Astrocyte of the cerebellum (primary cell): ENCODE measurements at regions of chr3 and their contacts with region 1.

Region 1: DNA sequence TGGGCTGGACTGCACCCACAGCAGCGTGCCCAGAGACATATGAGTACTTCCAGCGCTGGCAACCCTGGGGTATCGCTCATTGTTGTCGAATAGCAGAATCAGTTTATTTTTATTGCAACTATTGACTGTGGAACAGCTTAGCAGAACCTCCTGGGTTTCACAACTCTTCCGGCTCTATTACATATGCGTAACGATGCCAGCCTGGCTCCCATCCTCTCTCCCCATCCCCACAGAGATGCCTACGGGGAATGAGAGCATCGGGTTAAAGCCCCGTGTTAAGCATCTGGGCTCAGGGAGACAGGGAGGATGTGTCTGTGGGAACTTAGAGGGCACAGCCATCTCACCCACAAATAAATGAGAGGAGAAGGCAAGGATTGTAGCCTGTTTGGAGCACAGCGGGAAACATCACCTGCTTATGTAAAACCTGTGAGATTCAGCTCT is 76.6 kb upstream of the DLG1 start:
- DNase-seq: no peak
- H3K4me3 ChIP-seq: no peak overlapping the region
- CTCF ChIP-seq: no peak

Region 2: GRCh38 chr3:197327701-197328100 is 47.3 kb before region 1 on chr3:
- in situ Hi-C with region 1: no loop called
- DNase-seq: no peak
- H3K4me3 ChIP-seq: no peak overlapping the region
- CTCF ChIP-seq: no peak

Region 3: DNA sequence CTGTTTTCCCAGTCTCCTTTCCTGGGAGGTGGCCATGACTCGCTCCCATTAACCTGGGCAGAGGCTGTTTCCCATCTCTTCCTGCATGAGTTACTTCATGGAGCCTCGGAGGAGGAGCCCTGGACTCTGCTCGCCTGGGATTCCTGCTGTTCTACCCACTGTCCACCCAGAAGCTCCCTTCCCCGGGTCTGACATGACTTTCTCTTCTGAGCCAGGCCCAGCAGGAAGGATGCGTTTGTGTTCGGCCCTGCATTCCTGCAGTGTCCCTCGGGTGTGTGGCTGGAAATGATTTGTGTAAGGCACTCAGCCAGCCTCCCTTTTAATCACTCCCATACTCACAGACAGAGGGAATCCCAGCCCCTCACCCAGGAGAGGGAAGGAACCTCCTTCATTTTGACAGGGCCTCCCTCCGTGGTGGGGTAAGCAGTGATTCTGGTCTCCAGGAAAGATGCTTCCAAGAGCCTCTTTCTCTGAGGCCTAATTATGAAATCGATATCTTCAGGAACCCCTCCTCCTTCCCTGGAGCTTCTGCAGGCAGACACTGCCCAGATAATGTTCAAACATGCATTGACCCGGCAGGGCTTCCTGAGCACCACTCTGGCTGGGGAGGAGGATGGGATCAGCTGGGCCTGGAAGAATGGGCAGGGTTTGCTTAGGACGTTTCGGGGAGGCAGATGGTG is 35.0 kb before region 1 on chr3:
- in situ Hi-C with region 1: loop called (anchors 5 kb)
- DNase-seq: peak; percentile 64
- H3K4me3 ChIP-seq: no peak overlapping the region
- CTCF ChIP-seq: no peak

Region 4: DNA sequence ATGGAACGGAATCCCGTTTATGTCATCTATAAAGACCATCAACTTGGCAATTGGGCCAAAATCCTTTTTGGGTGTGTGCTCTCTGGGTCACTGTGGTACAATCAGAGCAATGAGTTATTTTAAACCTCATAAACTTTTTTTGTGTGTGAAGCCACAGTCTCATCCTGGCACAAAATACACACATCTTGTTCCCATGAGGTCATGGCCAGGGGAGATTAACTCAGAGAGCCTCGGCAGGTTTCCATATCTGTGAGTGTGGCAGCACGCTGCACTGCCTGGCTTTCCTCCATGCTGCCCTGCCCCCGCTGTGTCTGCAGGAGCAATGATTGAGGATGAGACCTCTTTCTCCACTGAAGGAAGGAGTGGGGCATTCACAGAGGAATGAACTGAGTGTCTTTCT is 22.6 kb before region 1 on chr3:
- in situ Hi-C with region 1: no loop called
- DNase-seq: no peak
- H3K4me3 ChIP-seq: no peak overlapping the region
- CTCF ChIP-seq: no peak